ENCODE measurements at regions of chr2 and their contacts with region 1.

Region 1: GRCh38 chr2:185638771-185639170 is 99.8 kb upstream of the FSIP2 start:
- DNase-seq: no peak
- H3K4me3 ChIP-seq: no peak overlapping the region
- H3K27ac ChIP-seq: no peak overlapping the region
- H3K4me1 ChIP-seq: no peaks in the 10 kb centered on the region
- H3K27me3 ChIP-seq: no peaks in the 10 kb centered on the region
- CTCF ChIP-seq: no peak
- POLR2A ChIP-seq: no peak

Region 2: DNA sequence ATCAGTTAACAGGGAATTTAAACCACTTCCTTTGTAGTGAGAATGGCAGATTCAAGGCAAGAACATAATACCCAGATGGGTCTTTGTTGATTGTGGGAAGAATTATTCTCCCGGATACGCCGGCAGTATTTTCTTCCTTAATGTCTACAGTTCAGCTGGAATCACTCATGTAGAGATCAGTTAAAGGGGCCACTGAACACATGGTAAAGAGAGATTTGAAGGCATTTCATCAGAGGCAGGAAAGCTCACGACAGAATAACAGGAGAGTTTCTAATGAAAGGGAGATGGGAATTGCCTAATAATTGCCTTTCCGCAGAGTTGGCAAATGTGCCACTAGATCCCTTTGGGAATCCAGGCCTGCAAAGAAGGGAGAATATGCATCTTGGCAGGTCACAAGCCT is 1368.1 kb before region 1 on chr2:
- intact Hi-C with region 1: loop called (anchors 10 kb)
- DNase-seq: no peak
- H3K4me3 ChIP-seq: no peak overlapping the region
- H3K27ac ChIP-seq: no peak overlapping the region
- H3K4me1 ChIP-seq: no peaks in the 10 kb centered on the region
- H3K27me3 ChIP-seq: no peaks in the 10 kb centered on the region
- CTCF ChIP-seq: no peak
- POLR2A ChIP-seq: no peak